ENCODE measurements at regions of chr5 and their contacts with region 1.

Region 1: DNA sequence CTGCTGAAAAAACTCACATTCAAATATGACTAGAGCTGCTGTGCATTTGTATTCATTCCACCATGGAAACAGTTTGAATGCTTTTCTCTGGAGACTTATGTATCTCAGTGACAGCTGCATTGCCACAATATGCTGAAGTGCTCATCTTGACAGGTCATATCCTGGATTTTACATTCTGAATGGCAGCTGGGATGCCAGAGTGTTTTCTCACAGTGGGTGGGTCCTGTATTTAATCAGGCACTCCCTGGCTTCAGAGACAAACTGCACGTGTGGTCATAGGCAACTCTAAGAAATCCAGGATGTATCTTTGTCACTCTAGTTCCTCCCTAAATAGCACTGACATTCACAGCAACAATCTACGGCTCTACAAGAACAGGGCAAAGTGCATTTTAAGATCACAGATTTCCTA is 75.6 kb downstream of the ST8SIA4 start:
- H3K4me3 Mint-ChIP-seq: peak overlapping the region; percentile 57
- H3K27ac Mint-ChIP-seq: peak overlapping the region; percentile 90
- H3K4me1 Mint-ChIP-seq: peaks cover 31% of the 10 kb centered on the region
- H3K27me3 Mint-ChIP-seq: no peaks in the 10 kb centered on the region

Region 2: DNA sequence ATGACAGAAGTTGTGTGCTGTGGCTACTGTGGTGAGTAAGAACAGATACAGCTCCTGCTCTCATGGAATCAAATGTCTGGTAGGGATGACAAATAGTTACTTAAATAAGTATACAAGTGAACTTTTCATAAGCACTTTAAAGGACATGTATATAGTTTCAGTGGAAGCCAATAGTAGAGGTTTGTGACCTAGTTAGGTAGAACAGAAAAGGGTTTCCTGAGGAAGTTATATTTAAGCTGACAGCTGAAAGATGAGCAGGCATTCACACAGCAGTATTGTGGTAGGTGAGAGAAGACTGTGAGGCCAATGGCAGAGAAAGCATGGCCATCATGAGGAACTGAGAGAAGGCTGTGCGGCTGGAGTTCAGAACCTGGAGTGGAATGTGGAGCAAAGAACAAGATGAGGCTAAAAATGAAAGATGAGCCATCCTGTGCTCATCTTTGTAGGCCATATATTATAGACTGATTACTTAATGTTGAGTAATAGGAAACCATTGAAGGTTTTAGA is 276.9 kb before region 1 on chr5:
- intact Hi-C with region 1: no loop called
- H3K4me3 Mint-ChIP-seq: no peak overlapping the region
- H3K27ac Mint-ChIP-seq: no peak overlapping the region
- H3K4me1 Mint-ChIP-seq: peaks cover 7% of the 10 kb centered on the region
- H3K27me3 Mint-ChIP-seq: no peaks in the 10 kb centered on the region

Region 3: DNA sequence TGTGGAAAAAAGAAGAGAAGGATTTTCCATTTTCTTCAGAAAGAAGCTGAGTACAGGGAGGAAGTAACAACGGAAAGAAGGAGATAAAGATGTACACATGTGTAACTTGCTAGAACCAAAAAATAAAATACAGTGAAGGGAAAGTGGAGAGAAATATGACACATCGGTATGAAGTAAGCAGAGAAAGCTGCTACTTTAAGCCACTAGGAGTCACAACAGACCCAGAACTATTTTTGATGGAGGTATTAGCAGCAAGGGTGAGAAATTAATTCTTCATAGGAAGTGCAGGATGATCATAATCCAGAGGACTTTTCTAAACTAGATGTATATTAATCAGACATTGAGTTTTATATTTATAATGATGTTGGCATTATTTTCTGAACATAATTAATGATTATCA is 203.8 kb before region 1 on chr5:
- intact Hi-C with region 1: loop called (anchors 10 kb)
- H3K4me3 Mint-ChIP-seq: no peak overlapping the region
- H3K27ac Mint-ChIP-seq: no peak overlapping the region
- H3K4me1 Mint-ChIP-seq: peaks cover 6% of the 10 kb centered on the region
- H3K27me3 Mint-ChIP-seq: no peaks in the 10 kb centered on the region

Region 4: GRCh38 chr5:100777680-100778281 is 49.7 kb before region 1 on chr5:
- intact Hi-C with region 1: loop called (anchors 2 kb)
- H3K4me3 Mint-ChIP-seq: peak overlapping the region; percentile 0
- H3K27ac Mint-ChIP-seq: peak overlapping the region; percentile 69
- H3K4me1 Mint-ChIP-seq: peaks cover 53% of the 10 kb centered on the region
- H3K27me3 Mint-ChIP-seq: no peaks in the 10 kb centered on the region

Region 5: GRCh38 chr5:100840384-100840783 is 12.9 kb after region 1 on chr5:
- intact Hi-C with region 1: loop called (anchors 2 kb)
- H3K4me3 Mint-ChIP-seq: no peak overlapping the region
- H3K27ac Mint-ChIP-seq: peak overlapping the region; percentile 95
- H3K4me1 Mint-ChIP-seq: peaks cover 20% of the 10 kb centered on the region
- H3K27me3 Mint-ChIP-seq: no peaks in the 10 kb centered on the region

Measured in dendritic cell treated with granulocyte-macrophage colony-stimulating factor and Interleukin-4, amounts not matched to agents 40 ng/mL and 50 ng/mL, for 4 days (primary cell).